ENCODE measurements at regions of chr12 and their contacts with region 1.

Region 1: DNA sequence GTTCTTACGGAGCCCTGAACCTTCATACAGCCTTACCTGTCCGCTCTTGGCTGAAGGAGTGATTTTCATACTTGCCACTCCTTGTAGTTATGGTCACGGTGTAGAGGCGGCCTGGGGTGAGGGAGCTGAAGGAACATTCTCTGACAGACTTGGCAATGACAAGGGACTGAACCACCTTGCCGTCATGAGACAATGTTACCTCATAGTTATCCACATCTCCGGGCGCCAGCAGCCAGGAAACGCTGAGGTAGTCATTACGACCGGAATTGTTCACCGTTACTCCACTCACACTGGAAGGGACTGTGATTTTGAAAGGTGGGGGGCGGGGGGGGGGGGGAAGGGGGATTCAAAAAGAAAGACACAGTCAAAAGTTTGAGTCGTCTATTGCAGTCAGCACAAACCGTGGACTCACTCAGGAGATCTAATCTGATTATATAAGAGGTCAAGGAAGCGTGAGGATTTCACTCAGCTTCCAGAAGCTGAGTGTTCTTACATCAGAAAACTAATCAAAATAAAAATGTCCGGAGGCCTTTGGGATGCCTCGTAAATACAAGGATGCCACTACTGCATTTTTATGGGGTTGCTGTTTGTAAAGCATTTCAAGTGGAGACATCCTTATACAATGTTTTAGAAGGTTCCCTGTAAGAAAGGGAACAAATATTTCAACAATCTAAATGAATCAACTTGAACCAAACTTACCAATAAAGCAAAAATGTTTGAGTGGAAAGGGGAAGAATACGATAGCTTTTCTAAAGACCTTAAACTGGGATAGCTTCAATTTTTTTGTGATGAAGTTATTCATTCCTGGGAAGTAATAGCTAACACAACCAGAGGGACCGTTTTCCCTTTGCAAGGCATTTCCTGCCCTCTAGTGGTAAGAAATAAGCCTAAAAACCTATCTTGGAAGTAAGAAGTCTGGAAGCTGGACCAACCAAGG is 60.6 kb downstream of the PTPRB start:
- DNase-seq: no peak
- H3K4me3 Mint-ChIP-seq: no peak overlapping the region
- H3K27ac Mint-ChIP-seq: no peak overlapping the region
- H3K4me1 Mint-ChIP-seq: no peaks in the 10 kb centered on the region
- H3K27me3 Mint-ChIP-seq: peaks cover 7% of the 10 kb centered on the region

Region 2: GRCh38 chr12:70214972-70215617 is 361.5 kb before region 1 on chr12:
- CTCF ChIA-PET with region 1: no interaction called
- intact Hi-C with region 1: loop called (anchors 10 kb)
- DNase-seq: no peak
- H3K4me3 Mint-ChIP-seq: no peak overlapping the region
- H3K27ac Mint-ChIP-seq: no peak overlapping the region
- H3K4me1 Mint-ChIP-seq: no peaks in the 10 kb centered on the region
- H3K27me3 Mint-ChIP-seq: no peaks in the 10 kb centered on the region

Region 3: GRCh38 chr12:70393787-70394499 is 182.7 kb before region 1 on chr12:
- CTCF ChIA-PET with region 1: no interaction called
- intact Hi-C with region 1: no loop called
- DNase-seq: no peak
- H3K4me3 Mint-ChIP-seq: no peak overlapping the region
- H3K27ac Mint-ChIP-seq: no peak overlapping the region
- H3K4me1 Mint-ChIP-seq: no peaks in the 10 kb centered on the region
- H3K27me3 Mint-ChIP-seq: no peaks in the 10 kb centered on the region

Measured in activated naive CD4-positive, alpha-beta T cell treated with anti-CD3 and anti-CD28 coated beads for 36 hours (primary cell).